ENCODE measurements at regions of chr14 and their contacts with region 1.

Region 1: GRCh38 chr14:61662437-61663311 is 32.6 kb upstream of the HIF1A start:
- DNase-seq: peak; percentile 40 to 82
- ATAC-seq: peak; percentile 88 to 96 (median 95)
- H3K4me3 ChIP-seq: no peak overlapping the region
- H3K4me3 Mint-ChIP-seq: peak overlapping the region; percentile 76
- H3K27ac ChIP-seq: peak overlapping the region; percentile 84
- H3K27ac Mint-ChIP-seq: peak overlapping the region; percentile 91 to 96
- H3K4me1 ChIP-seq: peaks cover 42% of the 10 kb centered on the region
- H3K4me1 Mint-ChIP-seq: peaks cover 49 to 56% of the 10 kb centered on the region in 2 donors
- H3K27me3 ChIP-seq: no peaks in the 10 kb centered on the region
- H3K27me3 Mint-ChIP-seq: no peaks in the 10 kb centered on the region
- CTCF ChIP-seq: no peak

Region 2: DNA sequence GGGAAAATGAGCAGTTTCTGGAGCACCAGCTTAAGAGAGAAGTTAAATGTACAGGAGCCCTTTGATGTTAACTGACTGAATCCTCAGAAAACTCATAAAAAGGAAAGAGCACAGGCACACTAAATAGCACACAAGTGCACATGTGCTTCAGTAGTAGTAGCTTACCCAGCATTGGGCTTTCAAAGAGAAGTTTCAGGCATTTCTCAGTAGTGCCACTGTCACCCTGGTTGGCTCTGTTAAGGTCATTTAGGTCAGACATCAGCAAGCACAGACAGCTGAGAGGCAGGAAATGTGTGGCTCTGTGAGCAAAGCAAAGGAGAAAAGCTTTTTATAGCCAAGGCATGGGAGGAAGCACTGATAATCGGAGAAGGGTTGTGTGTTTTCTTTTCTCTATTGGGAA is 63.7 kb before region 1 on chr14:
- intact Hi-C with region 1: loop called (anchors 2 kb)
- DNase-seq: peak in 1 of 2 donors; percentile 16
- ATAC-seq: peak in 1 of 3 donors; percentile 26
- H3K4me3 ChIP-seq: no peak overlapping the region
- H3K4me3 Mint-ChIP-seq: no peak overlapping the region
- H3K27ac ChIP-seq: no peak overlapping the region
- H3K27ac Mint-ChIP-seq: no peak overlapping the region
- H3K4me1 ChIP-seq: peaks cover 13% of the 10 kb centered on the region
- H3K4me1 Mint-ChIP-seq: peaks cover 19 to 29% of the 10 kb centered on the region in 2 donors
- H3K27me3 ChIP-seq: no peaks in the 10 kb centered on the region
- H3K27me3 Mint-ChIP-seq: peaks cover 0 to 2% of the 10 kb centered on the region in 2 donors
- CTCF ChIP-seq: no peak

Region 3: GRCh38 chr14:61812761-61813606 is 150.3 kb after region 1 on chr14:
- intact Hi-C with region 1: no loop called
- DNase-seq: peak in 1 of 2 donors; percentile 18
- ATAC-seq: peak in 1 of 3 donors; percentile 35
- H3K4me3 ChIP-seq: no peak overlapping the region
- H3K4me3 Mint-ChIP-seq: no peak overlapping the region
- H3K27ac ChIP-seq: no peak overlapping the region
- H3K27ac Mint-ChIP-seq: no peak overlapping the region
- H3K4me1 ChIP-seq: peaks cover 3% of the 10 kb centered on the region
- H3K4me1 Mint-ChIP-seq: peaks cover 0 to 4% of the 10 kb centered on the region in 2 donors
- H3K27me3 ChIP-seq: peaks cover 21% of the 10 kb centered on the region
- H3K27me3 Mint-ChIP-seq: peaks cover 42 to 65% of the 10 kb centered on the region in 2 donors
- CTCF ChIP-seq: no peak

Measured in natural killer cell (primary cell).